Activated CD4-positive, alpha-beta T cell treated with anti-CD3 and anti-CD28 coated beads for 36 hours (primary cell): ENCODE measurements at regions of chr9 and their contacts with region 1.

Region 1: GRCh38 chr9:131393622-131394463 is at the start of gene PRRC2B:
- DNase-seq: peak; percentile 94
- ATAC-seq: peak; percentile 44
- H3K4me3 Mint-ChIP-seq: peak within 1 kb of the TSS; percentile 88
- H3K27ac Mint-ChIP-seq: peak within 1 kb of the TSS; percentile 90
- H3K4me1 Mint-ChIP-seq: peaks cover 43% of the 10 kb centered on the region
- H3K27me3 Mint-ChIP-seq: no peaks in the 10 kb centered on the region
- total RNA-seq, gene PRRC2B: 151 to 184 TPM

Region 2: GRCh38 chr9:130815242-130815808 is 578.5 kb before region 1 on chr9:
- CTCF ChIA-PET with region 1: no interaction called
- POLR2A ChIA-PET with region 1: no interaction called
- intact Hi-C with region 1: no loop called
- DNase-seq: no peak
- ATAC-seq: no peak
- H3K4me3 Mint-ChIP-seq: no peak overlapping the region
- H3K27ac Mint-ChIP-seq: no peak overlapping the region
- H3K4me1 Mint-ChIP-seq: peaks cover 12% of the 10 kb centered on the region
- H3K27me3 Mint-ChIP-seq: no peaks in the 10 kb centered on the region

Region 3: GRCh38 chr9:131277910-131278701 is 115.7 kb before region 1 on chr9:
- CTCF ChIA-PET with region 1: no interaction called
- POLR2A ChIA-PET with region 1: no interaction called
- intact Hi-C with region 1: loop called in 1 of 2 experiments (anchors 2 kb)
- DNase-seq: peak; percentile 88
- ATAC-seq: peak; percentile 55
- H3K4me3 Mint-ChIP-seq: peak overlapping the region; percentile 75
- H3K27ac Mint-ChIP-seq: peak overlapping the region; percentile 71
- H3K4me1 Mint-ChIP-seq: peaks cover 22% of the 10 kb centered on the region
- H3K27me3 Mint-ChIP-seq: peaks cover 7% of the 10 kb centered on the region

Region 4: DNA sequence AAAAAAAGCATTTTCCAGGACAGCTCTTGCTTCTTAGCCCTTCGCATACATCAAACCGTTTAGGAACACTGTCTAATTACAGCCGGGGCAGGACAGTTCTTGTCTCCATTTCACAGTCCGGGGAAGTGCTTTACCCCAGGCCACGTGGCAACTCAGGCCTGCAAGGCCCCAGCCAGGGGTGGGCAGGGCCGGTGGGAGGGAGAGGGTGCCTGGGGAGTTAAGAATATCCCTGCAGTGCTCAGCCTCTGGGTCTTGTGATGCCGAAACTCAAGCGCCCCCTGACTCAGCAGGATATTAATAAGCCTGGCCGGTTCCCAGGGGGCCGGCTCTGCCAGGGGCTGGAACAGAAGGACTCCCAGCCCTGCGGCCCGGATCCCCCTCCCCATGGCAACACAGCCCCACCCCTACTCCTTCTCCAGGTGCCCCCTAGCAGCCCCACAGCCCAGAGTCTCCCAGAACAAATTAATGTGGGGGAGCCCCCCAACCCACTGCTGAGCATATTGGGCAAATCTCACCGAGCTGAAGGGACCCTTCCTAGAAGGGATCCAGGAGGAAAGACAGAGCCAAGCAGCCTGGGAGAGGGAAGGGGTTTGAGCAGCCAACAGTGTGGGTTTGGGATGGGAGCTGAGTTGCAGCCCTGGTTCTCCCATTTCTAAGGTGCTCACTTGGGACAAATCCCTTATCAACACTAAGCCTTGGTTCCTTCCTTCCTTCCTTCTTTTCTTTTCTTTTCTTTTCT is 59.0 kb before region 1 on chr9:
- CTCF ChIA-PET with region 1: no interaction called
- POLR2A ChIA-PET with region 1: no interaction called
- intact Hi-C with region 1: no loop called
- DNase-seq: no peak
- ATAC-seq: no peak
- H3K4me3 Mint-ChIP-seq: no peak overlapping the region
- H3K27ac Mint-ChIP-seq: no peak overlapping the region
- H3K4me1 Mint-ChIP-seq: peaks cover 2% of the 10 kb centered on the region
- H3K27me3 Mint-ChIP-seq: no peaks in the 10 kb centered on the region

Region 5: GRCh38 chr9:131407717-131408195 is 13.9 kb after region 1 on chr9:
- CTCF ChIA-PET with region 1: interaction called, 30 read pairs
- POLR2A ChIA-PET with region 1: interaction called, 24 read pairs
- intact Hi-C with region 1: loop called (anchors 1 kb)
- DNase-seq: peak; percentile 63
- ATAC-seq: peak; percentile 47
- H3K4me3 Mint-ChIP-seq: peak overlapping the region; percentile 56
- H3K27ac Mint-ChIP-seq: peak overlapping the region; percentile 78
- H3K4me1 Mint-ChIP-seq: peaks cover 93% of the 10 kb centered on the region
- H3K27me3 Mint-ChIP-seq: no peaks in the 10 kb centered on the region

Region 6: DNA sequence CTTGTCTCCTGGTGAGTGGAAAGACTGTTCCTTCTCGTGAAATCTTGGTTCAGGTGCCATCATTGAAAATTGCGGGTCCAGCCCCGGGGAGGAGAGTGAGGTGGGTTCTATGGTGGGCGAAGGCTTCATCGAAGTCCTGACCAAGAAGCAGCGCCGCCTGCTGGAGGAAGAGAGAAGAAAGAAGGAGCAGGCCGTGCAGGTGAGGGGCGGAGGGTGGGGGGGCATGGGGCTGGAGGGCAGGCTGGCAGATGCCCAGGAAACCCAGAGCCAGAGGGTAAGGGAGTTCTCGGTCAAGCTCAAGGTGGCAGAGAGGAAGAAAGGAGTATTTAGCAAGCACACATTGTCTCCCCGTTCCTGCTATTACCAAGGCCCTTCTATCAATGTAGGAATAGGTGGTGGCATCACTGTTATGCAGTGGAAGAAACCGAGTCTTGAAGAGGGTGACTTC is 84.6 kb after region 1 on chr9:
- CTCF ChIA-PET with region 1: no interaction called
- POLR2A ChIA-PET with region 1: interaction called, 3 read pairs
- intact Hi-C with region 1: loop called in 1 of 2 experiments (anchors 2 kb)
- DNase-seq: peak; percentile 78
- ATAC-seq: peak; percentile 64
- H3K4me3 Mint-ChIP-seq: no peak overlapping the region
- H3K27ac Mint-ChIP-seq: no peak overlapping the region
- H3K4me1 Mint-ChIP-seq: peaks cover 5% of the 10 kb centered on the region
- H3K27me3 Mint-ChIP-seq: no peaks in the 10 kb centered on the region

Region 7: GRCh38 chr9:131733541-131734061 is 339.8 kb after region 1 on chr9:
- CTCF ChIA-PET with region 1: no interaction called
- POLR2A ChIA-PET with region 1: no interaction called
- intact Hi-C with region 1: loop called (anchors 5 kb)
- DNase-seq: peak; percentile 70
- ATAC-seq: peak; percentile 9
- H3K4me3 Mint-ChIP-seq: peak overlapping the region; percentile 60
- H3K27ac Mint-ChIP-seq: peak overlapping the region; percentile 89
- H3K4me1 Mint-ChIP-seq: peaks cover 89% of the 10 kb centered on the region
- H3K27me3 Mint-ChIP-seq: no peaks in the 10 kb centered on the region